K562 (cell line): ENCODE measurements at regions of chr7 and their contacts with region 1.

Region 1: DNA sequence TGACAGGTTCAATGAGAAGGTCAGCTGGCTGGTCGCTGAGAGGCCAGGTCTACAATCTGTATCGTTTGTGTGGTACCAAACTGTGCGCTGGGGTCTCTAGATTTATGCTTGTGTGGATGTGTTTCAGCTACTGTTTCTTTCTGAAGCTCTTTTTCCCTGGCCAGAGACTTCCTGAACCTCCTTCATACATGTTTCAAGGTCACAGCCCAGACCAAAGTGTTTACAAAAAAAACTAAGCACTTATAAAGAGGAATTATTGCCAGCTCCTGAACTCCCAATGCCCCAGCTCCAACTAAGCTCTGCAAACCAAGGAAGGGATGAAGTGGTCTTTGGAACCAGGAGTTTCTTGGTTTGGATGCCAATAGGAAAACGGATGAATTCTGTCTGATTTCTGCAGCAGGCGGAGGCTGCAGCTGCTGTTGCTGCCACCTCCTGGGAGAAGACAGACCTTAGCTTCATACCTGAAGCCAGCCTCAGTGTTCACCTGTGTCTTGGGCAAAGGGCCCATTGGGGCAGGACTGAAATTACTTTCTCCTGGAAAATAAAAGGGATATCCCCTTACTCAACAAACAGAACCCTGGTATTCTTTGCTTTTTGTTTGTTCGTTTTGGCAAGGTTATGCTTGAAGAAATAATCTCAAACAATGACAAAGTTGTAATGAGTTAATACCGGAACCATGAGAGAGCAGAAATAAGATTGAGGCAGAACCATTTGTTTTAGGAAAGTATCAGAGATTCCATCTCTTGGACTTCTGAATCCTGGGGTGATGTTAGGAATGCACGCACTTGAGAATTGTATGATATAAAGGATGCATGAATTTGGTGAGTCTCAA is 24.6 kb upstream of the MKLN1 start:
- DNase-seq: peak in 1 of 4 experiments; percentile 32
- ATAC-seq: peak; percentile 70
- H3K4me3 ChIP-seq: no peak overlapping the region
- H3K27ac ChIP-seq: no peak overlapping the region
- H3K4me1 ChIP-seq: peaks cover 0 to 4% of the 10 kb centered on the region in 2 experiments; a peak in 1 of 5 replicates
- H3K27me3 ChIP-seq: no peaks in the 10 kb centered on the region
- CTCF ChIP-seq: peak; percentile 54 to 61 (median 59)
- EP300 ChIP-seq: no peak
- POLR2A ChIP-seq: no peak
- RAD21 ChIP-seq: peak; percentile 74

Region 2: DNA sequence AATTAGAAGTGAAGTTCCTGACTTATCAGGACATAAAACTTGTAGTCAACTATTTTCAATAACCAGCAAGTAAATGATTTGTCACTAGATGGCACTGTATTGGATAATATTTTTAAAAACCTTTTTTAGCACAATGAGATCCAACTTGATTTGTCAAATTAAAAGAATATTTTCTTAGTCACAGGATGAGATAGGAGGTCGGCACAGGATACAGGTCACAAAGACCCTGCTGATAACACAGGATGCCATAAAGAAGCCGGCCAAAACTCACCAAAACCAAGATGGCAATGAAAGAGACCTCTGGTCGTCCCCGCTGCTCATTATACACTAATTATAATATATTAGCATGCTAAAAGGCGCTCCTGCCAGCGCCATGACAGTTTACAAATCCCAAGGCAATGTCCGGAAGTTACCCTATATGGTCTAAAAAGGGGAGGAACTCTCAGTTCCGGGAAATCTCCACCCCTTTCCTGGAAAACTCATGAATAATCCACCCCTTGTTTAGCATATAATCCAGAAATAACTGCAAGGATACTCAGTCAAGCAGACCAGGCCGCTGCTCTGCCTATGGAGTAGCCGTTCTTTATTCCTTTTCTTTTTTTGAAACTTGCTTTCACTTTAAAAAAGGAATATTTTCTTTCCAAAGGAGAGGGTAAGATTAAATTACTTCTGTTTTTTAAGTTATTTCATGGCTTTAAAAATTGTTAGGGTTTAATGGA is 231.1 kb before region 1 on chr7:
- CTCF ChIA-PET with region 1: interaction called, 5 read pairs
- POLR2A ChIA-PET with region 1: no interaction called
- in situ Hi-C with region 1: no loop called
- intact Hi-C with region 1: loop called (anchors 2 kb)
- DNase-seq: peak; percentile 61 to 99 (median 67)
- ATAC-seq: peak; percentile 90
- H3K4me3 ChIP-seq: peak overlapping the region; percentile 15; the same call in 1 of the 2 replicates
- H3K27ac ChIP-seq: peak overlapping the region; percentile 80
- H3K4me1 ChIP-seq: peaks cover 10 to 34% of the 10 kb centered on the region in 2 experiments
- H3K27me3 ChIP-seq: no peaks in the 10 kb centered on the region
- CTCF ChIP-seq: peak; percentile 10 to 71 (median 55); a peak in 5 of 6 replicates
- EP300 ChIP-seq: peak; percentile 64
- POLR2A ChIP-seq: peak; percentile 63; the same call in 1 of the 2 replicates
- RAD21 ChIP-seq: peak; percentile 53 to 56; a peak in 3 of 4 replicates